Activated CD4-positive, alpha-beta memory T cell treated with anti-CD3 and anti-CD28 coated beads, Interleukin-2, amount 10 ng/mL, durations not matched to agents 7 days and 5 days (primary cell): ENCODE measurements at regions of chr4 and their contacts with region 1.

Region 1: GRCh38 chr4:128809477-128810330 is at the start of gene JADE1:
- DNase-seq: peak; percentile 92
- H3K4me3 Mint-ChIP-seq: peak within 1 kb of the TSS; percentile 96
- H3K27ac Mint-ChIP-seq: peak within 1 kb of the TSS; percentile 99
- H3K4me1 Mint-ChIP-seq: peaks cover 17% of the 10 kb centered on the region
- H3K27me3 Mint-ChIP-seq: no peaks in the 10 kb centered on the region
- total RNA-seq, gene JADE1: 29.6 to 32.7 TPM

Region 2: DNA sequence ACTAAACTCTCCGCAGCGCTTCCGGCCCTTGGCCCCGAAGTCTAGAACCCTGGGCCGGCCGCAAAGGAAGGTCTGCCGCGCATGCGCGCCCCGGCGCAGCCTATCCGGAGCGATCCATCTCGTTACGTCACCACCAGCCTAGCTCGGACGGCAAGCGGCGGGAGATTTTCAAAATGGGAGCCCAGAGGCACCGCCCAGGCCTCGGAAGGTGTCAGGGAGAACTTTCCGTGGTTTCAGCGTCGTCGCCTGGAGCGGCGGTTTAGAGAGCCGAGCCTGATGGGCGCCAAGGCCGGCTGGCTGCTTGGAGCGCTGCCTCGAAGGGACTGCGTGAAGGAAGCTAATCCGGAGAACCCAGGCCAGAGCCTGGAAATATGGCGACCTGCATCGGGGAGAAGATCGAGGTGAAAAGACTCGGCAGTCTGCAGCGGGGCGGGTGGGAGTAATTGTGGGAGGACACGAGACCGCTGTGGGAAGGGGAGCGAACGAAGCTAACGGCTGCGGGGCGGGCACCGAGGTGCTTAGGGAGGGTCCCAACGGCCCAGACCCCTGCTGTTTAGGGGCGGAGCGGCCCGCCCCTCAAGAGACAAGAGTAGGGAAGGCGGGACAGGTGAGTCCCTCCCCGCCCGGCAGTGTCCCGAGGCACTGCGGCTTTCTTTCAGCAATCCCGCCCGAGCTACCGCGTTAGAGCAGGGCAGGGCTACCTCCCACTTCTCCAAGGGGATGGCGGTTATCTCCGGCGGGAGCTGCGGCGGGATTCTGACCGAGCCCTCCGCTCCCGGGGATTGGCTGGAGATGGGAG is 928.7 kb before region 1 on chr4 and contains the start of gene PLK4:
- CTCF ChIA-PET with region 1: no interaction called
- POLR2A ChIA-PET with region 1: interaction called, 10 read pairs
- DNase-seq: peak; percentile 97
- H3K4me3 Mint-ChIP-seq: peak within 1 kb of the TSS; percentile 95
- H3K27ac Mint-ChIP-seq: peak within 1 kb of the TSS; percentile 93
- H3K4me1 Mint-ChIP-seq: peaks cover 58% of the 10 kb centered on the region
- H3K27me3 Mint-ChIP-seq: no peaks in the 10 kb centered on the region
- total RNA-seq, gene PLK4: 43.8 to 45.7 TPM

Region 3: DNA sequence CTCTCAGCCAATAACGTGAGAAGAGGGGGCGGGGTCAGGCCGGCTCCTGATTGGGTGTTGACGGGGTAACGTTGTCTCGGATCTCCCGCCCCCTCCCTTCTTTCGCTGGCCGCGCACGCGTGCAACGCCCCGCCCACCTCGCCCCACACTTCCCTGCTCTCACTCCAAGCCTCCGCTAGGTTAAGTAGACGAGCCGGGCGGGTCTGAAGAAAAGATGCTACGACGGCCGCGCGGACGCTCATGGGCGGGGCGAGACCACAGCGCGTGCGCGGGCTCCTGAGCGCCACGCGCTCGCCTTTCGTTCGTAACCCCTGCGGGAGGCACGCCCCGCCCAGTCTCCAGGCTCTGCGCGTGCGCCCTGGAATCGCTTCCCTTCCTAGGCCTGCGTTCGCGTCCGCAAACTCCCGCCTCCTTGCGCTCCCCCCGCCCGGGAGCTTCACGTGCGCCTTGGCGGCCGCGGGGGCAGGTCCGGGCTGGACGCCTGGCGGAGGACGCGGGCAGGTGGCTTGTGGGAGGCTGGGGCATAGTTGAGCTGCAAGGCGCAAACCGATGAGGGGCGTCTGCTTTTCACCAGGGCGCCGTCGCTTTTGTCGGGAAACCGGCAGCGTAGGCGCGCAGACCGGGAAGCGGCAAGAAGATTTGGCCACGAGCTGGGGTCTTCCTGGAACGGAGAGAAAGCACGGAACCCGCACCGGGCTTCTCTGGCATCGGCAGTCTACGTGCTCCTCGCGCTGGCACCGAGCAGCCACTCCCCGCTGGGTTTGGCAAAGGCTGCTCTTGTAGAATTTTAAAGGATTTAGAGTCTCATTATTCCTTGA is 521.6 kb before region 1 on chr4:
- CTCF ChIA-PET with region 1: no interaction called
- POLR2A ChIA-PET with region 1: interaction called, 26 read pairs
- DNase-seq: peak; percentile 99
- H3K4me3 Mint-ChIP-seq: peak overlapping the region; percentile 96
- H3K27ac Mint-ChIP-seq: peak overlapping the region; percentile 74
- H3K4me1 Mint-ChIP-seq: peaks cover 31% of the 10 kb centered on the region
- H3K27me3 Mint-ChIP-seq: peaks cover 2% of the 10 kb centered on the region

Region 4: DNA sequence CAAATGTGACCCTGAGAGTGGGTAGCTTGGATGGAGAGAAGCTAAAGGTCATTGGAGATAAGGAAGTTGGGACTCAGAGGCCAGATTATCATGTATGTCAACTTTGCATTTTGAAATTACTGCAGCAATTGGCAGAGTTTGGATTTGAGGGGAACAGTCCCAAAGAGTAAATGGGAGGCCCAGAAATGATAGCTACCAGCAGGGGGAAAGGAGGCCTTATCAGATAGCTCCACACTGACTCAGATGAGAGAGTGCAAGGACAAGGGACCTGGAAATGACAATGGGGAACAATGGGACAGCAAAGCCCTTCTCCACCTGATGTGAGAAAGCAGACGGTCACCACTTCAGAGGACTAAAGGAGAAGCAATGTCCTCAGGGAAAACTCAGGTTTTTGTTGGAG is 201.7 kb before region 1 on chr4:
- CTCF ChIA-PET with region 1: no interaction called
- POLR2A ChIA-PET with region 1: no interaction called
- DNase-seq: no peak
- H3K4me3 Mint-ChIP-seq: no peak overlapping the region
- H3K27ac Mint-ChIP-seq: no peak overlapping the region
- H3K4me1 Mint-ChIP-seq: no peaks in the 10 kb centered on the region
- H3K27me3 Mint-ChIP-seq: no peaks in the 10 kb centered on the region

Region 5: GRCh38 chr4:128700659-128701350 is 108.9 kb before region 1 on chr4:
- CTCF ChIA-PET with region 1: no interaction called
- POLR2A ChIA-PET with region 1: no interaction called
- DNase-seq: no peak
- H3K4me3 Mint-ChIP-seq: no peak overlapping the region
- H3K27ac Mint-ChIP-seq: no peak overlapping the region
- H3K4me1 Mint-ChIP-seq: no peaks in the 10 kb centered on the region
- H3K27me3 Mint-ChIP-seq: peaks cover 4% of the 10 kb centered on the region

Region 6: DNA sequence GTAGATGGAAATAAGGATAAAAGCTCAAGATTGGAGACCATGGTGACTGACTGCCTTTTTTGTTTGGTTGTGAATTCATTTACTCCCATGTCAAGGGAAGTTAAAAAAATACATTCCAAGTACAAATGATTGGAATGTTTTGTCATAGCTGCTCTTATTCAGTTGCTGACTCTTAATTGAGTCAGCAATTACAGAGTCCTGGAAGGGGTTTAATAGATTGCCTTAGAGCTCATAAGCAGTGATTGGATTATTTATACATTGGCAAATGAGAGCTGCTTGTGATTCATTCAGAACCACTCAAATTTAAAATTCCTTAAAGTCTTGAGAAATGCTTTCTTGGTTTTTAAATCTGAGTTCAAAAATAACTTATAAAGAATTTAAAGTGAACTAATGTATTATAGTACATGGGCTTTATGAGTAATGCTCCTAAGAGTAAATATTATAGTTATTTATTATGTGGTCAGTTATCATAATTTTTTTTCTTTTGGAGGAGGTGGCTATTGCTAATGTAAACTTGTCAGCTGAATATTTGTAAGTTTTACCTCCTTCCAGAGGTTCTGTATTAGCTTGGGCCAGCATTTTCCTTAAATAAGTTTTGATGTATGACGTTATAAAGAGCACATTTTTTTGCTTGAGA is 13.4 kb after region 1 on chr4:
- CTCF ChIA-PET with region 1: interaction called, 7 read pairs
- POLR2A ChIA-PET with region 1: interaction called, 21 read pairs
- DNase-seq: no peak
- H3K4me3 Mint-ChIP-seq: no peak overlapping the region
- H3K27ac Mint-ChIP-seq: no peak overlapping the region
- H3K4me1 Mint-ChIP-seq: peaks cover 53% of the 10 kb centered on the region
- H3K27me3 Mint-ChIP-seq: no peaks in the 10 kb centered on the region

Region 7: DNA sequence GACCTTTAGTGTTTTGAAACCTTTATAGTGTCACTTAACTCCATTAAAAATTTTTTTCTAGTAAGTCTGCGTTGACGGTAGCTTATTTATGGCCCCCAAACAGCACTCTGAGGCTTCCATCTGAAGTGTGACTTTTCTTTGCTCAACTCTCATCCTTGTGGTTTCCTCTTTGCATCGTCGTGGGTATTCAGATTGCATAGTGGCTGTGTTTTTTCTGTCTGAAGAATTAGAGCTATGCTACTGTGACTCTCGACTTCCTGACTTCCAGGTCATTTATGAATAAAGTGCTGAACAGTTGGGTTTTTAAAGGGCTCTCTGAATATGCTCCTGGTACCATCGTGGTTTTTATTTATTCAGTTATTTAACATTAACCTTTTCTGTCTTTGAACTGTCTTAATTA is 44.7 kb after region 1 on chr4:
- CTCF ChIA-PET with region 1: interaction called, 15 read pairs
- POLR2A ChIA-PET with region 1: interaction called, 35 read pairs
- DNase-seq: peak; percentile 39
- H3K4me3 Mint-ChIP-seq: no peak overlapping the region
- H3K27ac Mint-ChIP-seq: peak overlapping the region; percentile 78
- H3K4me1 Mint-ChIP-seq: peaks cover 36% of the 10 kb centered on the region
- H3K27me3 Mint-ChIP-seq: no peaks in the 10 kb centered on the region

Region 8: DNA sequence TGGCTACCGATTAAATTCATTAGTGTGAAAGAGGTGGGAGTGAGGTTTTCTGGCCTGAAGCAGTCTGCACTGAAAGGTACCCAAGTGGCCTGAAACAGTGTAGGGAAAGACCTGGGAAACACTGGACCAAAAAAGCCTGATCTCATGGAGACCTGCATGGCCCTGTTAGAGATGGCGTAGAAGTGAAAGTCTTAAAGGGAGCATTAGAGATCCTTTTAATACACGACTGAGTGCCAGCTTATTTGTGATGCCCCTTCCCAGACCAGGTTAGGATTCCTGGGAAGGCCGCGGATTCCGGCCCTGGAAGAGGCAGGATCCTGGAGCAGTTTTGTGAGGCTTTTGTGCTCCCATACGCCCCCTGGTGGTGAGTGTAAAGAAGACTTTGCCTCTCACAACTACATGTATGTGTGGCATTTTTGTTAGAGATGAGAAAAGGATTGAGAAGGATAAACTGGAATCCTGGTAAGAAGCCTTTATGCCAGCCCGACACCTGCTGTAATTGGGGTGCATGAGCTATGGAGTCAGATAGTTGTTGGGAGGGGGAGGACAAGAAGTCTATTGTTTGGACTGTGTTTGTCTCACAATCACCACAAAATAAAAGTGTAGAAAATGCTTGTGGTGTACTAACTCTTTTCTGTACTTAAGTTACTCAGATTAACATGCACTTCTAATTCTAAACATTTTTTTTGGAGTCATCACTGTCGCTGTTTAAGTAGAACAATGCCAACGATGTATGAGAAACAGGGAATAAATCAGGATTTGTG is 53.8 kb after region 1 on chr4:
- CTCF ChIA-PET with region 1: interaction called, 4 read pairs
- POLR2A ChIA-PET with region 1: interaction called, 31 read pairs
- DNase-seq: peak; percentile 67
- H3K4me3 Mint-ChIP-seq: no peak overlapping the region
- H3K27ac Mint-ChIP-seq: peak overlapping the region; percentile 60
- H3K4me1 Mint-ChIP-seq: peaks cover 48% of the 10 kb centered on the region
- H3K27me3 Mint-ChIP-seq: no peaks in the 10 kb centered on the region

Region 9: GRCh38 chr4:129093191-129093920 is 283.7 kb after region 1 on chr4 and contains the start of gene SCLT1:
- CTCF ChIA-PET with region 1: interaction called, 16 read pairs
- POLR2A ChIA-PET with region 1: interaction called, 140 read pairs
- DNase-seq: peak; percentile 98
- H3K4me3 Mint-ChIP-seq: no peak within 1 kb of the TSS
- H3K27ac Mint-ChIP-seq: no peak within 1 kb of the TSS
- H3K4me1 Mint-ChIP-seq: peaks cover 52% of the 10 kb centered on the region
- H3K27me3 Mint-ChIP-seq: no peaks in the 10 kb centered on the region
- total RNA-seq, gene SCLT1: 36.4 to 37.8 TPM